Calu3 (cell line): ENCODE measurements at regions of chr14 and their contacts with region 1.

Region 1: GRCh38 chr14:73295198-73295796 is 58.0 kb downstream of the PAPLN start:
- DNase-seq: peak; percentile 19
- H3K4me3 Mint-ChIP-seq: no peak overlapping the region
- H3K27ac Mint-ChIP-seq: no peak overlapping the region
- H3K4me1 Mint-ChIP-seq: peaks cover 19% of the 10 kb centered on the region
- H3K27me3 Mint-ChIP-seq: no peaks in the 10 kb centered on the region
- CTCF ChIP-seq: peak; percentile 47

Region 2: DNA sequence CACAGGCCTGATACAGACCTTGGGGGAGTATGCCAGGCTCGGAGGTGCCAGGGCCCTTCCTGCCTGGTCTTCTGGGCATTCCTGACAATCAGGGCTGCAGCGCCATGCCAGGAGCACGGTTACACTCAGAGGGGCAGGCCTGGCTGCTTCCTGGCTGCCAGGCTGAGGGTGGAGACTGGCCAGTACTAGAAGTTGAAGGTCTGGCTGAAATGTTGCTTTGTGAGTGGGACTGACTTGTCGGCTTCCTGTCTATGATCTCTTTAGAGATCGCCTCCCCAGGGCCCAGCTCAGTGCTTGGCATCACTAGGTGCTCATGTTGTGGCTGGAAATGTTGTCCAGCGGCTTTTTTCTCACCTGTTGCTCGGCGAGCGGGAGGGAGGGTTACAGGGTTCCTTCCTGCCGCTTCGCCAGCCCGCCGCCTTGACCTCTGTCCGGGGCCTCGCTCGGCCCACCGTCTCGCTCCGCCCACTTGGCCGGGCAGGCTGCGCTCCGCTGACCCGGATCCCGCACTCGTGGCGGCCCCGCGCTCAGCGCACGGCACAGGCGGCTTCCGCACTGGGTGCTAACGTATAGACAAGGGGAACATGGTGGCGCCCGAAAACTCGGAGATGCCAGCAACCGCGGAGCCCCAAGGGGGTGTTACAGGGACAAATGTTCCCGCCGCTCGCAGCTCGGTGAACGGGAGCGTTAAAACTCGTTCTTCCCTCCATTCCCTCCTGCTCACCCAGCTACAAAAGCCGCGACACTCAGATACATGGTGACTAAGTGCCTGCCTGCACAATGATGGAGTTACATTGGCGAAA is 25.4 kb before region 1 on chr14:
- CTCF ChIA-PET with region 1: no interaction called
- intact Hi-C with region 1: no loop called
- DNase-seq: no peak
- H3K4me3 Mint-ChIP-seq: no peak overlapping the region
- H3K27ac Mint-ChIP-seq: no peak overlapping the region
- H3K4me1 Mint-ChIP-seq: no peaks in the 10 kb centered on the region
- H3K27me3 Mint-ChIP-seq: no peaks in the 10 kb centered on the region
- CTCF ChIP-seq: no peak

Region 3: DNA sequence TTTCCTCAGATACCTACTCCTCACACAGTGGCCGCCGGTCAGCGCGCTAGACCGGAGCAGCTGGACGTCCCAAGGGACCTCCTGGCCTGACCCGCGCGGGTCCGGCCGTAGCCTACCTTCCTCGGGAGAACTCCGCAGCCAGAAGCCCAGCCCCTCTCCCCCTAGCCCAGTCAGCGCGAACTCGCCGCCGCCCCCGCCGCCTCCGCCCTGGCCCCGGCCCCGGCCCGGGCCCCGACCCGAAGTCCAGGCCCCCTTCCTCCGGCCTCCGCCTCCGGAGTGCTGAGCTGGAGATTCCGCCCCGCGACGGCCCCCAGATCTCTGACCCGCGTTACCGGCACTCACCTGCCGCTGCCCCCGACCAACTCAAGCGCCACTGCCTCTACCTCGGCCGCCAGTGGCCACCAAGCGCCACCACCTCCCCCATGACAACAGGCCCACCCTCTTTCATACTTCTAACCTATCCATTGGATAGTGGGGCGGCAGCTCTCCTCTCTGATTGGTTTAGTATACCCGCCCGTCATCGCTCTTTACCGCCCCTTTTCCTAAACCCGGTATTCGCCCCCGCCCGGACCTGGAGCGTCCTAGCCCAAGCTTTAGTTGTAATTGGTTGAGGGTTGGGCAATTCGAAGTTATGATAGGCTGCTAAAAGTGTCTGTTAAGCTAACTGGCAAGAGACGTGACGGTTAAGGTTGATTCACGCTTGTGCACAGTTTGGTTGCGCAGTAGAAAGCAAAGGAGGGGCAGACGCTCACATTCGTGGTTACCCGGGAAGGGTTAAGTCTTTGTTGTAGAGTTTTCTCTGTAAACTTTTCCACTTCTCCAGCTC is 163.1 kb after region 1 on chr14 and contains the start of gene NUMB:
- CTCF ChIA-PET with region 1: interaction called, 24 read pairs
- intact Hi-C with region 1: loop called (anchors 1 kb)
- DNase-seq: peak; percentile 96
- H3K4me3 Mint-ChIP-seq: peak within 1 kb of the TSS; percentile 85
- H3K27ac Mint-ChIP-seq: peak within 1 kb of the TSS; percentile 99
- H3K4me1 Mint-ChIP-seq: peaks cover 37% of the 10 kb centered on the region
- H3K27me3 Mint-ChIP-seq: no peaks in the 10 kb centered on the region
- CTCF ChIP-seq: no peak
- total RNA-seq, gene NUMB: 75.2 and 75.3 TPM in 2 replicates

Region 4: DNA sequence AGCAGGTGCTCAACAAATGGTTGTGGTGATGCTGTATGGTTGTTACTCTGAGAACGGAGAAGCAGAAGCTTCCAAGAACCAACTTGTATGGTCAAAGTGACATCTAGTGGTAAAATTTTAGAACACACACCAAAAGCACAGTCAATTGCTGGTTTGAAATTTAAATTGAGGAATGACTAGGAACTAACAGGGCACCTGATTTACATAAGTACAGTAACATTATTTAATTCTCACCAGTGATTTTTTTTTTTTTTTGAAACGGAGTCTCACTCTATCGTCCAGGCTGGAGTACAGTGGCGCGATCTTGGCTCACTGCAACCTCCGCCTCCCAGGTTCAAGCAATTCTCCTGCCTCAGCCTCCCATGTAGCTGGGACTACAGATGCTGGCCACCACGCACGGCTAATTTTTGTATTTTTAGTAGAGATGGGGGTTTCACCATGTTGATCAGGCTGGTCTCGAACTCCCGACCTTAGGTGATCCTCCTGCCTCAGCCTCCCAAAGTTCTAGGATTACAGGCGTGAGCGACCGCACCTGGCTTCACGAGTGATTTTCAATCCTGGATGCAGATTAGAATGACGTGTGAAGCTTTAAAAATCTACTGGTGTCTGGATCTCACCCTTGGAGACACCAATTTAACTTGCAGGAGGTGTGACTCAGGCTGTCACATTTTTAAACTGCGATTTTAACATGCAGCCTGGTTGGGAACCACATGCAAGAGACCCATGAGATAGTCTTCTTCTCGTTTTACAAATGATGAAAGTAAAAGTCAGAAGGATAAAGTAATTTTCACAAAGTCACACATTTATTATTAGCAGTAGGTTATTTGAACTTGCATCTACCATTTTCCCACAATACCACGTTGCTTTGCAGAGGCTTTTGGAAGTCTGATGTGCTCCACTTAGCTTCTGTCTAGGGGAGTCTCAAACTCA is 177.2 kb after region 1 on chr14:
- CTCF ChIA-PET with region 1: interaction called, 47 read pairs
- intact Hi-C with region 1: loop called (anchors 1 kb)
- DNase-seq: peak; percentile 25
- H3K4me3 Mint-ChIP-seq: no peak overlapping the region
- H3K27ac Mint-ChIP-seq: no peak overlapping the region
- H3K4me1 Mint-ChIP-seq: no peaks in the 10 kb centered on the region
- H3K27me3 Mint-ChIP-seq: no peaks in the 10 kb centered on the region
- CTCF ChIP-seq: peak; percentile 51